Activated CD4-positive, alpha-beta memory T cell treated with anti-CD3 and anti-CD28 coated beads for 36 hours (primary cell): ENCODE measurements at regions of chr3 and their contacts with region 1.

Region 1: DNA sequence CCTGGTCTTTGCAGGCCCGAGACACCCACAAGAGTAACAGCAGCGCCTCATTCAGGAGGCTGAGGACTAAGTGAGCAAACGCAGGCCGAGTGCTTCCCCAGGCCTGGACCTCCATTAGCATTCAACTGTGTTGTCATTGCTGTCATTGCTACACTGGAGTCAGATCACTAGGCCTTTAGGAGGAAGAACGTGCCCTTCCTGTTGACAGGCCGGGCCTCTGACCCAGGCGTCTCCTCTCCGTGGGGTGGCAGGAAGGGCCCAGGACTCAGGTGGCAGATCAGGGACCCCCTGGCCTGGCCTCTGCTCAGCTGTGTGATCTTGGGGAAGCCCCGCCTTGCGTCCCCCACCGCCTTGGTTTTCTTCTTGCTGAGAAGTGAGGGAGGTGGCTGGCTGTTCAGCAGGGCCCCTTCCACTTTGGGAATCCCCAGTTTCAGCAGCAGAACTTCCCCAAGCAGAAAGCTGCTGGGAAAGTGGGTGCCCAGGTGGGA is 19.1 kb downstream of the ZDHHC19 start:
- DNase-seq: peak; percentile 78
- H3K4me3 Mint-ChIP-seq: peak overlapping the region; percentile 50
- H3K27ac Mint-ChIP-seq: peak overlapping the region; percentile 86
- H3K4me1 Mint-ChIP-seq: peaks cover 48% of the 10 kb centered on the region
- H3K27me3 Mint-ChIP-seq: no peaks in the 10 kb centered on the region

Region 2: DNA sequence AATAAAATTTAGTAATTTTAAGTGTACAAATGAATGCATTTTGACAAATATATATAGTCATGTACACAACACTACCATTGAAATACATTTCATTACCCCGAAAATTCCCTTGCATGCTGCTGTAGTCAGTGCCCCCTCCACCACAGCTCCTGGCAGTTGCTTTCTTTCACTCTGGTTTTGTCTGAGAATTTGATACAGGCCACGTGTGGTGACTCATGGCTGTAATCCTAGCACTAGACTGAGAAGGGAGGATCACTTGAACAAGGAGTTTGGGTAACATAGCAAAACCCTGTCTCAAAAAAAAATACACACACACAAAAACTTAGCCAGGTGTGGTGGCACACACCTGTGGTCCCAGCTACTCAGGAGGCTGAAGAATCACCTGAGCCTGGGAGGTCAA is 175.6 kb before region 1 on chr3:
- CTCF ChIA-PET with region 1: interaction called, 10 read pairs
- POLR2A ChIA-PET with region 1: no interaction called
- intact Hi-C with region 1: no loop called
- DNase-seq: no peak
- H3K4me3 Mint-ChIP-seq: no peak overlapping the region
- H3K27ac Mint-ChIP-seq: no peak overlapping the region
- H3K4me1 Mint-ChIP-seq: no peaks in the 10 kb centered on the region
- H3K27me3 Mint-ChIP-seq: no peaks in the 10 kb centered on the region

Region 3: GRCh38 chr3:196136026-196136984 is 55.8 kb before region 1 on chr3:
- CTCF ChIA-PET with region 1: no interaction called
- POLR2A ChIA-PET with region 1: no interaction called
- intact Hi-C with region 1: no loop called
- DNase-seq: no peak
- H3K4me3 Mint-ChIP-seq: no peak overlapping the region
- H3K27ac Mint-ChIP-seq: no peak overlapping the region
- H3K4me1 Mint-ChIP-seq: no peaks in the 10 kb centered on the region
- H3K27me3 Mint-ChIP-seq: no peaks in the 10 kb centered on the region